Mucosa of descending colon (tissue), 3 donors: ENCODE measurements at regions of chr18 and their contacts with region 1.

Region 1: GRCh38 chr18:48663931-48664847 is 125.4 kb downstream of the CTIF start:
- DNase-seq: peak; percentile 69 to 85 (median 79)
- ATAC-seq: peak; percentile 78
- H3K4me3 ChIP-seq: no peak overlapping the region
- H3K4me1 ChIP-seq: peaks cover 3% of the 10 kb centered on the region
- CTCF ChIP-seq: peak; percentile 85

Region 2: DNA sequence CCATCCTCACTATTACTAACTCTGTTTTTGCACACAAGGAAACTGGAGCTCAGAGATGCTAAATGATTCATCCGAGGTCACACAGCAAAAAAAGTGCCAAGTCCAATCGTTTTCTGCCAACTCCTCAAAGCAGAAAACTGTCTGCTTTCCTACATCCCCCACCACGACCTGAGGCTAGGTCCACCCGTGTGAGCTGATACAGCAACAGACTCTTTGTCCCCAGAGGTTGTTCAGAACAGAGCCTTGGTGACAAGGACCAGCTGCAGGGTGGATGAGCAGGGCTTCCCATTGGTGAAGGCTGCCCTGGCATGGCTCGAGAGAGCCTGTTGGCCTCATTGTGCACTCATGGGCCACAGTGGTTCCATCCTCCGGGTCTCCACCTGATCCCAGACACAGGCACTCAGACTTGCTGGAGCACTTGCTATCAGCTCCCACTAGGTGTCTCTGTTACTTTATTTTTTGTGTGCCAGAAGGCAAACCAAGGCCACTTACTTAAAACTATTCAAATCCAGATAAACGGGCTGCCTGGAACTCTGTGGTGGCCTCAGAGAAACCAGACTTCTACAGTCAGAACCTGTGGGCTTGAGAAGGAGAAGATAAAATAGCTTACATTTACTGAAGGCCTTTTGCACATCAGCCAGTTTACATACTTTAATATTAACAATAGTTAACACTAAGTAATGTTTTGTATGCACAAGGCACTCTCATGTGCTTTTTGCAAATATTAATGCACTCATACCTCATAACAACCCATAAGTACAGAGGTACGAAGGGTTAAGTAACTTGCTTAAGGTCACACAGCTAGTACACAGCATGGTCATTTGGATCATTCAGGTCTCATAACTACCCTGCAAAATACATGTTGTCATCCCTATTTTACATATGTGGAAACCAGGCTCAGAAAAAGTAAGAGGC is 188.3 kb before region 1 on chr18:
- intact Hi-C with region 1: loop called (anchors 5 kb)
- DNase-seq: peak in 2 of 3 donors; percentile 29 to 62
- ATAC-seq: peak; percentile 79
- H3K4me3 ChIP-seq: no peak overlapping the region
- H3K4me1 ChIP-seq: no peaks in the 10 kb centered on the region
- CTCF ChIP-seq: peak; percentile 56